ENCODE measurements at regions of chr9 and their contacts with region 1.

Region 1: GRCh38 chr9:123349691-123350480 is 6.1 kb upstream of the CRB2 start:
- DNase-seq: peak; percentile 33 to 80 (median 65)
- ATAC-seq: peak; percentile 85
- H3K4me3 ChIP-seq: no peak overlapping the region
- H3K4me3 Mint-ChIP-seq: no peak overlapping the region
- H3K27ac ChIP-seq: no peak overlapping the region
- H3K27ac Mint-ChIP-seq: peak overlapping the region in 2 of 9 donors; percentile 34 to 35
- H3K4me1 ChIP-seq: no peaks in the 10 kb centered on the region
- H3K4me1 Mint-ChIP-seq: peaks cover 0 to 5% (median 4%) of the 10 kb centered on the region in 7 donors
- H3K27me3 ChIP-seq: no peaks in the 10 kb centered on the region
- H3K27me3 Mint-ChIP-seq: peaks cover 0 to 9% (median 0%) of the 10 kb centered on the region in 5 donors

Region 2: GRCh38 chr9:122464633-122465567 is 885.0 kb before region 1 on chr9:
- CTCF ChIA-PET with region 1: no interaction called
- POLR2A ChIA-PET with region 1: no interaction called
- intact Hi-C with region 1: loop called (anchors 1 to 2 kb)
- DNase-seq: peak; percentile 24 to 80 (median 73)
- ATAC-seq: peak; percentile 84
- H3K4me3 ChIP-seq: peak overlapping the region; percentile 71
- H3K4me3 Mint-ChIP-seq: peak overlapping the region; percentile 77 to 96 (median 90)
- H3K27ac ChIP-seq: peak overlapping the region; percentile 57
- H3K27ac Mint-ChIP-seq: peak overlapping the region; percentile 49 to 94 (median 87)
- H3K4me1 ChIP-seq: peaks cover 0 to 5% of the 10 kb centered on the region in 2 donors
- H3K4me1 Mint-ChIP-seq: peaks cover 6 to 20% (median 14%) of the 10 kb centered on the region in 7 donors
- H3K27me3 ChIP-seq: no peaks in the 10 kb centered on the region
- H3K27me3 Mint-ChIP-seq: peaks cover 11 to 60% (median 43%) of the 10 kb centered on the region in 5 donors

Region 3: GRCh38 chr9:122904823-122905710 is 444.8 kb before region 1 on chr9 and contains the start of gene RC3H2:
- CTCF ChIA-PET with region 1: no interaction called
- POLR2A ChIA-PET with region 1: no interaction called
- intact Hi-C with region 1: loop called in 1 of 2 experiments (anchors 5 kb)
- DNase-seq: peak; percentile 80 to 99 (median 97)
- ATAC-seq: peak; percentile 94
- H3K4me3 ChIP-seq: peak within 1 kb of the TSS; percentile 74
- H3K4me3 Mint-ChIP-seq: peak within 1 kb of the TSS; percentile 89 to 96 (median 93)
- H3K27ac ChIP-seq: peak within 1 kb of the TSS; percentile 100
- H3K27ac Mint-ChIP-seq: peak within 1 kb of the TSS; percentile 93 to 98 (median 95)
- H3K4me1 ChIP-seq: peaks cover 14 to 21% of the 10 kb centered on the region in 2 donors
- H3K4me1 Mint-ChIP-seq: peaks cover 11 to 47% (median 40%) of the 10 kb centered on the region in 7 donors
- H3K27me3 ChIP-seq: no peaks in the 10 kb centered on the region
- H3K27me3 Mint-ChIP-seq: peaks cover 0 to 3% (median 0%) of the 10 kb centered on the region in 5 donors
- total RNA-seq, gene RC3H2: 52.3 to 66.4 (median 57.0) TPM

Region 4: DNA sequence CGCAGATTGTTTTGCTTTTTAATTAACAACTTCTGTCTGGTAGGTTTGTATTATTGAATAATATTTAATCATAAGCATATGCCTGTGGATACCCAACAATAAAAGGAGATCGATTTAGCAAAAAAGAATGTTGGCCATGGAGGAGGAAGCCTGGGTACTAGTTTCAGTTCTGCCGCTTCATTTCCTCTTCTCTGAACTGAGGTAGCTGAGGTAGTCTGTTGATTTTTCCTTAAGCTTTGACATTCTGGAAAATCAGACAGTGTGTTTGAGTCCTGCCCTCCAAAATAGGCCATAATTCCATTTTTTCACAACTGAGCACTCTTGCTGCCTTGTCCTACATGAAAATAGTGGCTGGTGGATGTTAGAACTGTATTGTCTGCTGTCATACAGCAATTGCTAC is 322.4 kb before region 1 on chr9:
- CTCF ChIA-PET with region 1: interaction called, 4 read pairs
- POLR2A ChIA-PET with region 1: no interaction called
- intact Hi-C with region 1: loop called in 1 of 2 experiments (anchors 10 kb)
- DNase-seq: no peak
- ATAC-seq: no peak
- H3K4me3 ChIP-seq: no peak overlapping the region
- H3K4me3 Mint-ChIP-seq: no peak overlapping the region
- H3K27ac ChIP-seq: no peak overlapping the region
- H3K27ac Mint-ChIP-seq: no peak overlapping the region
- H3K4me1 ChIP-seq: no peaks in the 10 kb centered on the region
- H3K4me1 Mint-ChIP-seq: peaks cover 0 to 8% (median 2%) of the 10 kb centered on the region in 7 donors
- H3K27me3 ChIP-seq: no peaks in the 10 kb centered on the region
- H3K27me3 Mint-ChIP-seq: no peaks in the 10 kb centered on the region

Region 5: DNA sequence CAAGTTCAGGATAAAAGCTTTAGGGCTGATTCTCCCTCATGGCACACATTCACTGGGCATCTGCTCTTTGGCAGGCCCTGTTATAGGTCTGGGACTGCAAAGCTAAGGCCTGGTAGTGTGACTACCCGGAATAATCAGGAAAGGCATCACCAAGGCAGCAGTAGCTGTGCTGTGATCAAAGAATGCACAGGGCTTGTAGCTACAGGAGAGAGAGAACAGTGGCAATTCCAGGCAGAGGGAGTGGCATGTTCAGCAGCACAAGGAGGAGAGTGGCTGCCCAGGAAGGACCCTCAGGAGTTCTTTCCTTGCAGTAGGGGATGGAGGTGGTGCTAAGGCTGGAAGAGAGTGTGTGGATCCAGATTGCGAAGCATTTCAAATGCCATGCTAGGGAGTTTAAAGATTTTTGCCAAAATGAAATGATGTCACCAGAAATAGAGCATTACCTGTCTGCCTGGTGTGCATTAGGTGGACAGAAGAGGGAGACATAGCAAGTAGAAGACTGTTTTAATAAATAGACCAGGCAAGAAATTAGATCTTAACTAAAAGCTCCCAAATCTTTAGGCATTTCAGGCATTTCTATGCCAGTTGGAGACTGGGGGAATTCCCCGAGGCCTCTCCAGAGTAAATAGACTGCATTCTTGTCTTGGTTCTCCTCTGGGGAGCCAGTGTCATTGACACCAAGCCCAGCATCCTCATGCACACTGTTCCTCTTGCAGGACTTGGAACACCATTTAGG is 247.3 kb before region 1 on chr9:
- CTCF ChIA-PET with region 1: interaction called, 15 read pairs
- POLR2A ChIA-PET with region 1: no interaction called
- intact Hi-C with region 1: loop called (anchors 1 to 5 kb)
- DNase-seq: no peak
- ATAC-seq: no peak
- H3K4me3 ChIP-seq: no peak overlapping the region
- H3K4me3 Mint-ChIP-seq: no peak overlapping the region
- H3K27ac ChIP-seq: no peak overlapping the region
- H3K27ac Mint-ChIP-seq: peak overlapping the region in 5 of 9 donors; percentile 9 to 68 (median 52)
- H3K4me1 ChIP-seq: no peaks in the 10 kb centered on the region
- H3K4me1 Mint-ChIP-seq: no peaks in the 10 kb centered on the region
- H3K27me3 ChIP-seq: no peaks in the 10 kb centered on the region
- H3K27me3 Mint-ChIP-seq: no peaks in the 10 kb centered on the region

Region 6: DNA sequence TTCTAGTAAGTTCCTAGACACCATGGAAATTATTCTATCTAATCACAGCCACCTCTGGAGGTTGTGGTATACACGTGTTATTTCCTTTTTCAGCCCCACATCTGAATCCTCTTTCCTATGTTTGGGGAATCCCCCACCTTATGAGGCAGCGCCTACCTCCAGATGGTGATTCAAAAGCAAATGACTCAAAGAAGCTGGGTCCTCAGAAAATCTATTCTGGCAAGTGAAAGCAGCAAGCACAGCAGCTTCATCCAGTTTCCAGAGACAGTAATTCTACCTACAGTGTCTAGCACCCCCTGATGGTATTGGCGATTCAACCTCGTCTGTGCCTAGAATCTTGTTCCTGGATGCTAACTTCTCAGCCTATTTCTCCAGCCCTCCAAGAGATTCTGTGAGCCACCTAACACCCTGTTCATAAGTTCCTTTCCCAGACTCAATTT is 124.5 kb before region 1 on chr9:
- CTCF ChIA-PET with region 1: no interaction called
- POLR2A ChIA-PET with region 1: no interaction called
- intact Hi-C with region 1: loop called (anchors 1 to 5 kb)
- DNase-seq: peak in 8 of 9 donors; percentile 14 to 67 (median 38)
- ATAC-seq: peak; percentile 93
- H3K4me3 ChIP-seq: no peak overlapping the region
- H3K4me3 Mint-ChIP-seq: peak overlapping the region in 3 of 10 donors; percentile 1 to 24 (median 6)
- H3K27ac ChIP-seq: no peak overlapping the region
- H3K27ac Mint-ChIP-seq: peak overlapping the region in 6 of 9 donors; percentile 2 to 48 (median 34)
- H3K4me1 ChIP-seq: peaks cover 7 to 9% of the 10 kb centered on the region in 2 donors
- H3K4me1 Mint-ChIP-seq: peaks cover 10 to 31% (median 18%) of the 10 kb centered on the region in 7 donors
- H3K27me3 ChIP-seq: no peaks in the 10 kb centered on the region
- H3K27me3 Mint-ChIP-seq: no peaks in the 10 kb centered on the region

Region 7: GRCh38 chr9:123389070-123389469 is 39.2 kb after region 1 on chr9:
- CTCF ChIA-PET with region 1: interaction called, 3 read pairs
- POLR2A ChIA-PET with region 1: no interaction called
- intact Hi-C with region 1: loop called (anchors 1 kb)
- DNase-seq: no peak
- ATAC-seq: peak; percentile 37
- H3K4me3 ChIP-seq: no peak overlapping the region
- H3K4me3 Mint-ChIP-seq: no peak overlapping the region
- H3K27ac ChIP-seq: no peak overlapping the region
- H3K27ac Mint-ChIP-seq: no peak overlapping the region
- H3K4me1 ChIP-seq: no peaks in the 10 kb centered on the region
- H3K4me1 Mint-ChIP-seq: peaks cover 0 to 5% (median 0%) of the 10 kb centered on the region in 7 donors
- H3K27me3 ChIP-seq: no peaks in the 10 kb centered on the region
- H3K27me3 Mint-ChIP-seq: no peaks in the 10 kb centered on the region

Measured in naive thymus-derived CD4-positive, alpha-beta T cell (primary cell).